Naive thymus-derived CD4-positive, alpha-beta T cell (primary cell): ENCODE measurements at regions of chr13 and their contacts with region 1.

Region 1: DNA sequence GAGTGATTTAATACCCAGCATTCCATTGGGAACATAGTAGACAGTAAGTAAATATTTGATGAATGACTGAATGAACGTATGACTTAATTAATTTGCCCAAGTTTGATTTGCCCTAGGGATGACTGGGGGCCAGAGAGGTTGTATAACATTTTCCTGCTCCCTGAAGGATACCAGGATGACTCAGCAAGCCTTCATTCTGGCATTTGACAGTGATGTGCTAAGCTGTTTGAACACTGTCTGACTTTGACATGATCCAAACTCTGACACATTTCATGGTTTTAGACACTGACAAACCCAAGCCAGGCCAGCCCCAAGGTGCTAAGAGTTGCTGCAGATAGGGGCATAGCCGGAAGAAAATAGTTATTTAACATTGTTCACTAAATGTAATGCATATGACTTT is 53.4 kb upstream of the KLF12 start:
- DNase-seq: no peak
- ATAC-seq: no peak
- H3K4me3 ChIP-seq: no peak overlapping the region
- H3K4me3 Mint-ChIP-seq: no peak overlapping the region
- H3K27ac ChIP-seq: no peak overlapping the region
- H3K27ac Mint-ChIP-seq: no peak overlapping the region
- H3K4me1 ChIP-seq: peaks cover 5 to 6% of the 10 kb centered on the region in 2 donors
- H3K4me1 Mint-ChIP-seq: peaks cover 7 to 20% (median 14%) of the 10 kb centered on the region in 7 donors
- H3K27me3 ChIP-seq: no peaks in the 10 kb centered on the region
- H3K27me3 Mint-ChIP-seq: no peaks in the 10 kb centered on the region

Region 2: GRCh38 chr13:74206061-74206561 is 18.5 kb after region 1 on chr13:
- CTCF ChIA-PET with region 1: no interaction called
- POLR2A ChIA-PET with region 1: interaction called, 3 read pairs
- intact Hi-C with region 1: loop called in 1 of 2 experiments (anchors 2 kb)
- DNase-seq: no peak
- ATAC-seq: no peak
- H3K4me3 ChIP-seq: no peak overlapping the region
- H3K4me3 Mint-ChIP-seq: no peak overlapping the region
- H3K27ac ChIP-seq: no peak overlapping the region
- H3K27ac Mint-ChIP-seq: no peak overlapping the region
- H3K4me1 ChIP-seq: no peaks in the 10 kb centered on the region
- H3K4me1 Mint-ChIP-seq: peaks cover 0 to 8% (median 0%) of the 10 kb centered on the region in 7 donors
- H3K27me3 ChIP-seq: no peaks in the 10 kb centered on the region
- H3K27me3 Mint-ChIP-seq: peaks cover 0 to 28% (median 0%) of the 10 kb centered on the region in 5 donors